Activated CD4-positive, alpha-beta memory T cell treated with anti-CD3 and anti-CD28 coated beads for 36 hours (primary cell): ENCODE measurements at regions of chr14 and their contacts with region 1.

Region 1: DNA sequence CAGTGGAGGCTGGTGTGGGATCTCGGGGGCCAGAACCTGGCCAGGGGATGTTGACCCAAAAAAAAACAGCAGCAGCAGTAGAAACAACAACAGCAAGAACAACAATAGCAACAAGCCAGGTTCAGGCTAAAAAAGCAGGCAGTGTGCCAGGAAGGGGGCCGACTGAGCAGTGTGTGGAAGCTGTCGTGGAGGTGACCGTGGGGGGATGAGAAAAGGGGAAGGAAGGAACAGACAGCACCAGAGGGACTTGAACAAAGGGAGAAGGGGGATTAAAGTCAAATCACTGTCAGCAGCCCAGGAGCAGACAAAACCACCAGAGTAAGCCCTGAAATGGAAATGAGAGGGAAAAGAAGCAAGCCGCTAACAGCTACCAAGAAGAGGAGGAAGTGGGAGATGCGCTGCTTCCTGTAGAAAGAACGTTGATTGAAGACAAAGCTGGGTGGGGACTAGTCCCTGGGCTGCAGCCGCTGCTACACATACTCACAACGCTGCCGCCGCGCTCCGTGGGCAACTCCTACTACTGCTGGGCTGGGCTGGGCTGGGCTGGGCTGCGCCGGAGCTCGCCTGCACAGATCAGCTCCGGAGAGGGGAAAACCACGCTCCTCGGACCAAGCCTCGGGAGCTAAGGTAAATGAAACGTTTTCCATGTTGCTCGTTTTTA is at the start of gene GNG2:
- DNase-seq: peak; percentile 91
- H3K4me3 Mint-ChIP-seq: peak within 1 kb of the TSS; percentile 96
- H3K27ac Mint-ChIP-seq: peak within 1 kb of the TSS; percentile 96
- H3K4me1 Mint-ChIP-seq: peaks cover 52% of the 10 kb centered on the region
- H3K27me3 Mint-ChIP-seq: no peaks in the 10 kb centered on the region
- total RNA-seq, gene GNG2: 146 TPM

Region 2: DNA sequence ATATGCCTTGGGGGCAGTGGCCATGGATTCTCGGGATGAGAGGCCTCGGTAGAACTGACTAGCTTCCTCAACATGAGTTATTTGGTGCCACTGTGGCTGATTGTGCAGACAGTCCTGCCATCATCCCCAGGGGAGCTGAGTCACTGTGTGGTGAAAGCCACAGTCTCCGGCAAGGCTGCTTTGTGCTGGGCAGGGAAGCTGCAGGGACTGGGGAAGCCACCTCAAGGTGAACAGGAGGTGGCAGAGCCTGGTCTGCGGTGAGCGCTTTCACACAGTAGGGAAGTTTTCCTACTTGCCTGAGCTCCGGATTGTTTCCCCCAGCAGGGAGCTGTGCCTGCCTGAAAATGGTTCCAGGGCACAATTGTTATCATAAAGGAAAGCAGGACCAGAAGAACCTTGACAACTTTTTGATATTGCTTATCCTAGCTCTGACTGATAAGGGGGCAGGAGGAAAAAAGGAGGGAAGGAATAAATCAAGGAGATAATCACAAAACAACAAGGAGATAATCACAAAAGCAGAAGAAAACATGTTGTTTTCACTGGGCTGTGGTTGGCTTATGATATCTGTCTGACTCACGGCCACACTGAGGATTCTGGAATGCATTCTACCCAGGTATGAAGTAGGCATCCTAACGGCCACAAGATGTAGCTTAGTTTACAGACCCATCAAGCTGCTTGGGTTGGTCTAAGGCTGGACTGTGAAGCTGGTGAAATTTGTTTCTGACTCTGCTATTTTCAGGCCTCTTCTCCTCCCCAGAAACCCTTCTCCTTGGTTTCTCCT is 32.1 kb before region 1 on chr14:
- CTCF ChIA-PET with region 1: interaction called, 7 read pairs
- POLR2A ChIA-PET with region 1: interaction called, 6 read pairs
- intact Hi-C with region 1: loop called (anchors 1 kb)
- DNase-seq: peak; percentile 90
- H3K4me3 Mint-ChIP-seq: no peak overlapping the region
- H3K27ac Mint-ChIP-seq: no peak overlapping the region
- H3K4me1 Mint-ChIP-seq: no peaks in the 10 kb centered on the region
- H3K27me3 Mint-ChIP-seq: no peaks in the 10 kb centered on the region